ENCODE measurements at regions of chr6 and their contacts with region 1.

Region 1: GRCh38 chr6:35786810-35787209 is 6.0 kb downstream of the CLPSL1 start:
- DNase-seq: no peak
- ATAC-seq: peak; percentile 46; the same call in 1 of the 2 replicates
- H3K4me3 ChIP-seq: peak overlapping the region; percentile 6; the same call in 1 of the 2 replicates
- H3K27ac ChIP-seq: no peak overlapping the region
- H3K4me1 ChIP-seq: no peaks in the 10 kb centered on the region
- H3K27me3 ChIP-seq: peaks cover 35% of the 10 kb centered on the region
- CTCF ChIP-seq: no peak

Region 2: DNA sequence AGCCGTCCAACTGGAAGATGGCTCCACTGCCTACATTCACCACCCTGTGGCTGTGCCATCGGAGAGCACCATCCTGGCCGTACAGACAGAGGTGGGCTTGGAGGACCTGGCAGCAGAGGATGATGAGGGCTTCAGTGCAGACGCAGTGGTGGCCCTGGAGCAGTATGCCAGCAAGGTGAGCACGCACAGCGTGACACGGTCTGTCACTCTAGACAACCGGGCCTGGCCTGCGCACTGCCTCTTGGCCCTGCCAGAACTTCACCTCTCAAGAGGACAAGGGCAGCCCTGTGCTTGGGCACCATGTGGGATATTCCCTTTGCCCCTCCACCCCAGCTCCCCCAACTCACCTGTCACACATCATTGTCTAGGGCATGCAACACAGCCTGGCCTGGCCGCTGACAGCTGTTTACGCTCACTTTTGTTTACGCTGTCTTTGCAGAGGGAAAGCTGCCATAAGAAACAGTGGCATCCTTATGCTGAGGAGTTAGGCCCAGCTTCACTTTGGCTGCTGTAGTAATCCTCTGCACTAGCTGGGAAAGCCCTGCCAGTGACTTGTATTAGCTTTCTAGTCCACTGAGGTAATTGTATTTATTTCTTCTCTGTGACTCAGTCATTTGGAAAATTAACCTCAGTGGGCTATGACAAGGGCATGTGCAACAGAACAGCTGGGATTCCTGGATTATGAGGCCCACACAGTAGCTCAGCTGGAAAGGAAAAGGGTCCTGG is 499.0 kb before region 1 on chr6:
- CTCF ChIA-PET with region 1: no interaction called
- POLR2A ChIA-PET with region 1: no interaction called
- intact Hi-C with region 1: no loop called
- DNase-seq: no peak
- ATAC-seq: no peak
- H3K4me3 ChIP-seq: no peak overlapping the region
- H3K27ac ChIP-seq: no peak overlapping the region
- H3K4me1 ChIP-seq: no peaks in the 10 kb centered on the region
- H3K27me3 ChIP-seq: no peaks in the 10 kb centered on the region
- CTCF ChIP-seq: no peak

Region 3: DNA sequence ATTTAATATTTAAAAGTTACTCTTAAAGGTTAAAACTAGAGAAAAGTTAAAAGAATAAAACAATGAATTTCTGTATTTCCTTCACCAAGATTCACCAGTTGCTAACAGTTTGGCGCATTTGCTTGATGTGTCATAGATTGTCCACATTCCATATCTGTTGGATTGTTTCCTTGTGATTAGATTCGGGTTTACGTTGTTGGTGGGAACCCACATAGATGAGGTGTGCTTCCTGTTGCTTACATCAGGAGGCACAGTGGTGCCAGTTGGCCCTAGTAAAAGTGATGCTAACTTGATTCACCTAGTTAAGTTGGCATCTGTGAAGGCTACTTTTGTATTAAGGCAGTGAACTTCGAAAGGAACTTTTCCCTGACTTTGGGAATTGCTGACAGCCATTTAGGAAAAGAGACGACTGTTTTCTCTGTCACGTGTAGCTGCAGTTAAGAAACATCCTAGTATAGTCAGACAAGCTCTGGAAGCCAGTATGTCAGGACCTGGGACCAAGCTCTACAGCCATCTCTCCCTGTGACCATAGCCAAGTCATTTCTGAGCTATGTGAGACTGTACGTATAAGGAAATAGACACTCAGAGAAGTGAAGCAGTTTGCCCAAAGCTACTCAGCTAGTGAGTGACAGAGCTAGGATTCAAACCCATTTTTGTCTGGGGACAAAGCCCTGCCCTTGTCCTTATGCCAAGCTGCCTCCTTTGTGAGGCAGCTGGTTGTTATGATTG is 395.4 kb before region 1 on chr6:
- CTCF ChIA-PET with region 1: no interaction called
- POLR2A ChIA-PET with region 1: interaction called, 18 read pairs
- intact Hi-C with region 1: no loop called
- DNase-seq: peak; percentile 99
- ATAC-seq: peak; percentile 75
- H3K4me3 ChIP-seq: peak overlapping the region; percentile 29; the same call in 1 of the 2 replicates
- H3K27ac ChIP-seq: peak overlapping the region; percentile 99
- H3K4me1 ChIP-seq: peaks cover 55% of the 10 kb centered on the region
- H3K27me3 ChIP-seq: no peaks in the 10 kb centered on the region
- CTCF ChIP-seq: peak; percentile 22; the same call in 1 of the 2 replicates

Region 4: DNA sequence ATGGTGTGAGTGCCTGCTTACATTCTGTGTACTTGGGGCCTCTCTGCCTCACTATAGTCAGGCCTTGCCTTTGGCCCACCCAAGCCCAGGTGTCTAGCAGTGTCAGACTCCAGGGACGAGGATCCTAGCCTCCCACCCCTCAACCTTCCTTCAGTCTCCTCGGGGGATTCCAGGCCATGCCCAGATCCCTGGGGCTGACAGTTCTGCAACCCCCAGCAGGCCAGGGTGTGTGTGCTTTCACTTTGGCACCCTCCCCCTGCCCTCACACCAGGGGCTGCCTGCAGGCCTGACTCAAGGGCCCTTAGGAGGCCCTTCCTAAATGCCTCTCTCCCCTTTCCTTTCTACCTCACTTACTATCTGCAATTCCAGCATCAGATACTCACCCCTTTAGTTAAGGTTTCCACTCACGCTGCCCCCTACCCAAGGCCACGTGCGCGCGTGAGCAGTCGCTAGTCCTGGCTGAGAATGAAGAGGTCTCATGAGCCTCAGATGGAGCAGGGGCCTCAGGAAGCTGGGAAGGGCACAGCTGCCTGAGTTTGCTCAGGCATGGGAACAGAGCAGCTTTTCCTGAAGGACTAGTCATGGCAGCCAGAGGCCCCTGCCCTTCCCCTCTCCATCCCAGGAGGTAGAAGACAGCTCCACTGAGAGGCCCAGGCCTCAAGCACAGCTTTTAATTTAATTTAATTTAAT is 11.2 kb after region 1 on chr6:
- CTCF ChIA-PET with region 1: no interaction called
- POLR2A ChIA-PET with region 1: interaction called, 4 read pairs
- intact Hi-C with region 1: loop called (anchors 1 kb)
- DNase-seq: no peak
- ATAC-seq: no peak
- H3K4me3 ChIP-seq: no peak overlapping the region
- H3K27ac ChIP-seq: no peak overlapping the region
- H3K4me1 ChIP-seq: no peaks in the 10 kb centered on the region
- H3K27me3 ChIP-seq: no peaks in the 10 kb centered on the region
- CTCF ChIP-seq: no peak

Region 5: GRCh38 chr6:35893246-35893645 is 106.4 kb after region 1 on chr6:
- CTCF ChIA-PET with region 1: no interaction called
- POLR2A ChIA-PET with region 1: no interaction called
- intact Hi-C with region 1: no loop called
- DNase-seq: no peak
- ATAC-seq: no peak
- H3K4me3 ChIP-seq: no peak overlapping the region
- H3K27ac ChIP-seq: no peak overlapping the region
- H3K4me1 ChIP-seq: peaks cover 12% of the 10 kb centered on the region
- H3K27me3 ChIP-seq: no peaks in the 10 kb centered on the region
- CTCF ChIP-seq: no peak

Region 6: GRCh38 chr6:36130667-36131510 is 344.1 kb after region 1 on chr6:
- CTCF ChIA-PET with region 1: interaction called, 11 read pairs
- POLR2A ChIA-PET with region 1: no interaction called
- intact Hi-C with region 1: no loop called
- DNase-seq: peak; percentile 60
- ATAC-seq: peak; percentile 52
- H3K4me3 ChIP-seq: peak overlapping the region; percentile 75
- H3K27ac ChIP-seq: peak overlapping the region; percentile 51
- H3K4me1 ChIP-seq: peaks cover 39% of the 10 kb centered on the region
- H3K27me3 ChIP-seq: no peaks in the 10 kb centered on the region
- CTCF ChIP-seq: peak; percentile 38; the same call in 1 of the 2 replicates